GM23248 (cell line): ENCODE measurements at regions of chr7 and their contacts with region 1.

Region 1: GRCh38 chr7:139777948-139778841 is at the start of gene HIPK2:
- DNase-seq: peak; percentile 87
- H3K4me3 ChIP-seq: peak within 1 kb of the TSS; percentile 98
- H3K27ac ChIP-seq: peak within 1 kb of the TSS; percentile 88
- H3K4me1 ChIP-seq: peaks cover 25% of the 10 kb centered on the region
- H3K27me3 ChIP-seq: no peaks in the 10 kb centered on the region
- total RNA-seq, gene HIPK2: 7.9 and 9.1 TPM in 2 replicates

Region 2: GRCh38 chr7:139995017-139995931 is 217.1 kb after region 1 on chr7:
- in situ Hi-C with region 1: loop called (anchors 25 kb)
- DNase-seq: peak; percentile 75
- H3K4me3 ChIP-seq: no peak overlapping the region
- H3K27ac ChIP-seq: no peak overlapping the region
- H3K4me1 ChIP-seq: no peaks in the 10 kb centered on the region
- H3K27me3 ChIP-seq: no peaks in the 10 kb centered on the region